HCT116 (cell line): ENCODE measurements at regions of chr6 and their contacts with region 1.

Region 1: GRCh38 chr6:3977875-3978711 is 100.8 kb downstream of the FAM217A start:
- DNase-seq: peak; percentile 74
- ATAC-seq: peak; percentile 96
- H3K4me3 ChIP-seq: no peak overlapping the region
- H3K27ac ChIP-seq: no peak overlapping the region
- H3K4me1 ChIP-seq: peaks cover 2 to 5% of the 10 kb centered on the region in 2 experiments; a peak in 3 of 4 replicates
- H3K27me3 ChIP-seq: no peaks in the 10 kb centered on the region
- CTCF ChIP-seq: peak; percentile 71 to 83 (median 79)
- POLR2A ChIP-seq: no peak
- RAD21 ChIP-seq: peak; percentile 69

Region 2: GRCh38 chr6:3280091-3280490 is 698.0 kb before region 1 on chr6:
- CTCF ChIA-PET with region 1: no interaction called
- POLR2A ChIA-PET with region 1: no interaction called
- RAD21 ChIA-PET with region 1: no interaction called
- intact Hi-C with region 1: loop called (anchors 10 kb)
- DNase-seq: no peak
- ATAC-seq: 0 out of 2 replicates have a peak, but pooled peaks have one; percentile 21
- H3K4me3 ChIP-seq: no peak overlapping the region
- H3K27ac ChIP-seq: no peak overlapping the region
- H3K4me1 ChIP-seq: no peaks in the 10 kb centered on the region
- H3K27me3 ChIP-seq: no peaks in the 10 kb centered on the region
- CTCF ChIP-seq: no peak
- POLR2A ChIP-seq: no peak
- RAD21 ChIP-seq: no peak

Region 3: GRCh38 chr6:3683331-3683730 is 294.8 kb before region 1 on chr6:
- CTCF ChIA-PET with region 1: no interaction called
- POLR2A ChIA-PET with region 1: no interaction called
- RAD21 ChIA-PET with region 1: no interaction called
- intact Hi-C with region 1: no loop called
- DNase-seq: no peak
- ATAC-seq: no peak
- H3K4me3 ChIP-seq: no peak overlapping the region
- H3K27ac ChIP-seq: no peak overlapping the region
- H3K4me1 ChIP-seq: no peaks in the 10 kb centered on the region
- H3K27me3 ChIP-seq: no peaks in the 10 kb centered on the region
- CTCF ChIP-seq: no peak
- POLR2A ChIP-seq: no peak
- RAD21 ChIP-seq: no peak

Region 4: GRCh38 chr6:3748208-3749066 is 229.7 kb before region 1 on chr6:
- CTCF ChIA-PET with region 1: interaction called, 24 read pairs
- POLR2A ChIA-PET with region 1: no interaction called
- RAD21 ChIA-PET with region 1: interaction called in 1 of 2 experiments, 3 read pairs
- intact Hi-C with region 1: loop called (anchors 1 kb)
- DNase-seq: peak; percentile 53
- ATAC-seq: peak; percentile 70
- H3K4me3 ChIP-seq: no peak overlapping the region
- H3K27ac ChIP-seq: no peak overlapping the region
- H3K4me1 ChIP-seq: peaks cover 12 to 50% of the 10 kb centered on the region in 2 experiments; a peak in 3 of 4 replicates
- H3K27me3 ChIP-seq: no peaks in the 10 kb centered on the region
- CTCF ChIP-seq: peak; percentile 77 to 85 (median 84)
- POLR2A ChIP-seq: no peak
- RAD21 ChIP-seq: peak; percentile 81

Region 5: GRCh38 chr6:3929281-3929798 is 48.8 kb before region 1 on chr6:
- CTCF ChIA-PET with region 1: interaction called, 11 read pairs
- POLR2A ChIA-PET with region 1: no interaction called
- RAD21 ChIA-PET with region 1: interaction called in 1 of 2 experiments, 4 read pairs
- intact Hi-C with region 1: no loop called
- DNase-seq: no peak
- ATAC-seq: no peak
- H3K4me3 ChIP-seq: no peak overlapping the region
- H3K27ac ChIP-seq: no peak overlapping the region
- H3K4me1 ChIP-seq: peaks cover 0 to 4% of the 10 kb centered on the region in 2 experiments; a peak in 1 of 4 replicates
- H3K27me3 ChIP-seq: no peaks in the 10 kb centered on the region
- CTCF ChIP-seq: no peak
- POLR2A ChIP-seq: no peak
- RAD21 ChIP-seq: no peak

Region 6: DNA sequence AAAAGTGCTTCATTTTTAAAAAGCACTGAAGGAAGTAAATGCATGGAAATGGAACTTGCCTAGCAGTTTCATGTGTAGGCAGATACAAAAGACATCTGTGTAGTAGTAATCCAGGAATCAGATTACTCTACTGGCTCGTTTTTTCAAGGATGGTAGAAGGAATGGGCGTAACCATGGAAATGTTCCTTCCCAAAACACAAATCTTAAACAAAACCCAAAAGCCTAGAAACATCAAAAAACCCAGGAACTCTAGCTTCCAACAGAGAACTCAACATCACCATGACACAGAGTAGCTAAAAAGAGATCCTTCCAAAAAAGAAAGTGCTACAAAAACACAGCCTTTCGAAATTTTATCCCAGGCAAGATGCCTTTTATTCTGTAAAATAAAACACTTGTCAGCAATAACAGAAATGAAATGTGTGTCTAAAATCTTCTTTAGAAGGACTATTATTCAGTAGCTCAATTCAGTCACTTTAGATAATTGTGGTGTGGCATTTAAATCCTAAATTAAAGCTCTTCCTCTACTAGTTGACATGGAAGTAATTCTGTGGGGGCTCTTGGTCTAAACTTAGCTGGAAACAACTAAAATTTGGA is 19.2 kb after region 1 on chr6:
- CTCF ChIA-PET with region 1: interaction called, 18 read pairs
- POLR2A ChIA-PET with region 1: no interaction called
- RAD21 ChIA-PET with region 1: no interaction called
- intact Hi-C with region 1: no loop called
- DNase-seq: no peak
- ATAC-seq: no peak
- H3K4me3 ChIP-seq: no peak overlapping the region
- H3K27ac ChIP-seq: no peak overlapping the region
- H3K4me1 ChIP-seq: no peaks in the 10 kb centered on the region; a peak in 1 of 4 replicates
- H3K27me3 ChIP-seq: no peaks in the 10 kb centered on the region
- CTCF ChIP-seq: no peak
- POLR2A ChIP-seq: no peak
- RAD21 ChIP-seq: no peak